H1 (cell line): ENCODE measurements at regions of chr4 and their contacts with region 1.

Region 1: DNA sequence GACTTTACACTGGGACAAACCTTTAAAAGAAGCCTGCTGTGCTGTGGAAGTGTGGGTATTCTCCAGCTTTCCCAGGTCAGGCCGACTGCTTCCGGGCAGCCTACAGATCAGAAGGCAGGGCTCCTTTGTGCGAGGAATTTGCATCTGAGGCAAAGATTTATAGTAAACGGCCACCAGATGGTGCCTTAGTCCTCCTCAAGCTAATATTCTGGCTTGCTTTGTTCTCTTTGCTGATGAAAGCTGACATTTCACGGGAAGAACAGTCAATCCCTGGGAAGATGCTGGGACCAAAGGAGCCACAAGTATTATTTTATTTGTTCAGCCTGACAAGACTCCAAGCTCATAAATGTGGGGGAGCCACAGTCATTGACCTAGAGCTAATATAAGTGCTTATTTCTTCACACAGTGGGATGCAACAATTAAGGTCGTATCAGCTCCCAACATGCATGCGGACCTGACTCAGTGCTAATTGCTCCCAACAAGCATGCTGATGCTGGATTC is 120.7 kb upstream of the TRIM2 start:
- DNase-seq: peak; percentile 56 to 63
- H3K4me3 ChIP-seq: no peak overlapping the region
- H3K27ac ChIP-seq: no peak overlapping the region
- H3K4me1 ChIP-seq: peaks cover 3 to 21% (median 15%) of the 10 kb centered on the region in 4 experiments
- H3K27me3 ChIP-seq: peaks cover 0 to 7% (median 2%) of the 10 kb centered on the region in 4 experiments; a peak in 2 of 7 replicates
- CTCF ChIP-seq: peak in 2 of 3 experiments; percentile 67; a peak in 3 of 4 replicates
- EP300 ChIP-seq: peak in 1 of 2 experiments; percentile 59; a peak in 1 of 3 replicates
- POLR2A ChIP-seq: no peak
- RAD21 ChIP-seq: peak; percentile 63 to 75

Region 2: DNA sequence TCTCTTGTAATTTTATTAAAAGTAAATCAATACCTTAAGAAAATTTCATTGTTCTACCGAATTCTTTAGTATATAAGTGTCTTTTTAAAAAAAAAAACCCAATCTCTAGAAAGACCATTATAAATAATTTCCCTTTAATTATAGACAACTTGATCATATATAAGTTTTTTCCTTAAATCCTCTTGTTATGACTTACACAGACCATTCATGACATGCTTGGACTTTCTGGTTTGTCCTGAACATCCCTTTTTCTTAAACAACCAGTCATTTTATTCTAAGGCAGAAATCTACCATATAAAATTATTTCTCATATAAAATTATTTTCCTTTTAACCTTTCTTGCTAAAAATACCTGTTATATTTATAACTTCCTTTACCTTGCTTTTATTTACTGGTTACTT is 162.7 kb before region 1 on chr4:
- CTCF ChIA-PET with region 1: no interaction called
- POLR2A ChIA-PET with region 1: no interaction called
- DNase-seq: no peak
- H3K4me3 ChIP-seq: no peak overlapping the region
- H3K27ac ChIP-seq: no peak overlapping the region
- H3K4me1 ChIP-seq: no peaks in the 10 kb centered on the region; a peak in 1 of 7 replicates
- H3K27me3 ChIP-seq: no peaks in the 10 kb centered on the region
- CTCF ChIP-seq: no peak
- EP300 ChIP-seq: no peak
- POLR2A ChIP-seq: no peak
- RAD21 ChIP-seq: no peak

Region 3: DNA sequence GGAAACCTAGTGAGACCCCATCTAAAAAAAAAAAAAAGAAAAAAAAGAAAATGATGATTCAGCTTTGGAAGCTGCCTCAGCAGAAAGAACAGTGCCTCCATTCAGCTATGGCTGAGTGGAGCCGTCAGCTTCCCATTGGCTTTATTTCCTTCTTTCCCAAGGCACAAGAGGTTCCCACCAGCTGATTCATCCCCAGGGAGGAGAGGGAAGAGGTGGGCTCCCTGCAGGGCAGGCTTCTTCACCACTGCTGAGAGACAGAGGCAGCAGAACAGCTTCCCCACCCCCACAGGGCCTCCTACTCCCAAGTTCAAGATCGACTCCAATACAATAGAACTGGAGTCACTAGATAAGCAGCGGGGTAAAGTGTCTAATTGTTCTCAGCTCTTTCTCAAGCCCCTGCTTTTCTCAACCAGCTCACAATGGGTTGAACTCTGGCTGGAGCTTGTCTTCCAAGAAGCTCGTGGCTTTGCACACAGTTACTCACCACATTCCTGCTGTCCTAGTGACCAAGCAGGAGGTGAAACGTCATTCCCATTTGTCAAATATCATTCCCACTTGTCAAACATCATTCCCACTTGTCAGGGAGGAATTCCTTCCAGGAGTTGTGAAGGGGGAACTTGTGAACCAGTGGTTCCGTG is 99.6 kb before region 1 on chr4:
- CTCF ChIA-PET with region 1: interaction called, 18 read pairs
- POLR2A ChIA-PET with region 1: interaction called, 3 read pairs
- DNase-seq: no peak
- H3K4me3 ChIP-seq: no peak overlapping the region
- H3K27ac ChIP-seq: no peak overlapping the region
- H3K4me1 ChIP-seq: peaks cover 3 to 7% (median 4%) of the 10 kb centered on the region in 4 experiments
- H3K27me3 ChIP-seq: no peaks in the 10 kb centered on the region
- CTCF ChIP-seq: no peak
- EP300 ChIP-seq: no peak
- POLR2A ChIP-seq: no peak
- RAD21 ChIP-seq: no peak

Region 4: GRCh38 chr4:153060196-153060595 is 23.3 kb before region 1 on chr4:
- CTCF ChIA-PET with region 1: interaction called, 13 read pairs
- POLR2A ChIA-PET with region 1: no interaction called
- DNase-seq: no peak
- H3K4me3 ChIP-seq: no peak overlapping the region
- H3K27ac ChIP-seq: no peak overlapping the region
- H3K4me1 ChIP-seq: peaks cover 0 to 6% (median 3%) of the 10 kb centered on the region in 4 experiments; a peak in 3 of 7 replicates
- H3K27me3 ChIP-seq: no peaks in the 10 kb centered on the region
- CTCF ChIP-seq: no peak
- EP300 ChIP-seq: no peak
- POLR2A ChIP-seq: no peak
- RAD21 ChIP-seq: no peak

Region 5: GRCh38 chr4:153095448-153096204 is 12.1 kb after region 1 on chr4:
- CTCF ChIA-PET with region 1: interaction called, 92 read pairs
- POLR2A ChIA-PET with region 1: no interaction called
- DNase-seq: no peak
- H3K4me3 ChIP-seq: no peak overlapping the region
- H3K27ac ChIP-seq: no peak overlapping the region
- H3K4me1 ChIP-seq: 0 out of 7 replicates have a peak, but pooled peaks cover 0 to 3% (median 0%) of the 10 kb centered on the region in 4 experiments
- H3K27me3 ChIP-seq: no peaks in the 10 kb centered on the region
- CTCF ChIP-seq: no peak
- EP300 ChIP-seq: no peak
- POLR2A ChIP-seq: no peak
- RAD21 ChIP-seq: no peak

Region 6: GRCh38 chr4:153115322-153116290 is 32.1 kb after region 1 on chr4:
- CTCF ChIA-PET with region 1: interaction called, 15 read pairs
- POLR2A ChIA-PET with region 1: no interaction called
- DNase-seq: no peak
- H3K4me3 ChIP-seq: no peak overlapping the region
- H3K27ac ChIP-seq: no peak overlapping the region
- H3K4me1 ChIP-seq: no peaks in the 10 kb centered on the region; a peak in 1 of 7 replicates
- H3K27me3 ChIP-seq: no peaks in the 10 kb centered on the region; a peak in 1 of 7 replicates
- CTCF ChIP-seq: no peak
- EP300 ChIP-seq: no peak
- POLR2A ChIP-seq: no peak
- RAD21 ChIP-seq: no peak